ENCODE measurements at regions of chr1 and their contacts with region 1.

Region 1: GRCh38 chr1:185044981-185045813 is at the start of gene RNF2:
- DNase-seq: peak; percentile 95
- H3K4me3 ChIP-seq: peak within 1 kb of the TSS; percentile 68 to 95
- H3K27ac ChIP-seq: peak within 1 kb of the TSS; percentile 54 to 89
- H3K4me1 ChIP-seq: peaks cover 14 to 16% of the 10 kb centered on the region in 2 experiments; a peak in 3 of 4 replicates
- H3K27me3 ChIP-seq: no peaks in the 10 kb centered on the region
- CTCF ChIP-seq: no peak
- EP300 ChIP-seq: no peak
- RAD21 ChIP-seq: peak; percentile 4; the same call in 1 of the 2 replicates
- polyA plus RNA-seq, gene RNF2: 20.1 and 21.8 TPM in 2 replicates

Region 2: DNA sequence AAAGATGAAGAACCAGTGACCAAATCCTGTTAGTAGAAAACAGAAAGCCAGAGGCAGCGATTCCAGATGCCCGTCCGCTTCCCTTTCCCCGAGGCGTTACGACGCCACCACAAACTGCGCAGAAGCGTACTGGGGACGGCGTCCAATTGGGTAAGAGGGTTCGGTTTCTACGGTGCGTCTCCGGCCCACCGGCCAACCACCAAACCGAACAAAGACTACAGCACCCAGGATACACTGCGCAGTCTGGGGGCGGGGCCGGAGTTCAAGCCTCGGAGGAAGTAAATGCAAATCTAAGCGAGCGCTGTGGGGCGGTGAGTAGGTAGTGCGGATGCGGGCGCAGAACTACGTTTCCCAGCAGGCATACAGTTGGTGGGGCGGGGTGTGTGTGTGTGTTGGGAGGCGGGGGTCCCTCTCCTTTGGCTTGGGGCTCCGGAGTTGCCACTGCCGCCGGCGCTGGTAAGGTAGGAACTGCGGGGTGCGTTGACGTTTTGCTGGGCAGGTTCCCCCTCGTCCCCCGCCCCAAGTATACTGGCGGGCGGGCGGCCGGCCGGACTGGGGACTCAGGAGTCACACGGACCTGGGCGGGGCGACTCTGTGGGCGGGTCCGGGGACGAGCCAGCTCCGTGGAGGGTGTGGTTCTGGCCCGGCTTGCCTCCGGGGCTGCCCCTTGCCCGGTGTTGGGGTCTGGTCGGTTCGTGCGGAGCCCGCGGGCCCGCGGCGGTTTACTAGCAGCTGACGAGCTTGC is 111.8 kb after region 1 on chr1 and contains the starts of genes SWT1 and TRMT1L:
- CTCF ChIA-PET with region 1: no interaction called
- POLR2A ChIA-PET with region 1: interaction called, 15 read pairs
- DNase-seq: peak; percentile 92
- H3K4me3 ChIP-seq: peak within 1 kb of the TSS; percentile 92 to 94
- H3K27ac ChIP-seq: peak within 1 kb of the TSS; percentile 93 to 100
- H3K4me1 ChIP-seq: peaks cover 8 to 23% of the 10 kb centered on the region in 2 experiments; a peak in 3 of 4 replicates
- H3K27me3 ChIP-seq: no peaks in the 10 kb centered on the region
- CTCF ChIP-seq: no peak
- EP300 ChIP-seq: no peak
- RAD21 ChIP-seq: no peak
- polyA plus RNA-seq, gene SWT1: 1.1 and 1.6 TPM in 2 replicates
- polyA plus RNA-seq, gene TRMT1L: 12.2 and 13.0 TPM in 2 replicates

Measured in SK-N-SH (cell line).